ENCODE measurements at regions of chr11 and their contacts with region 1.

Region 1: DNA sequence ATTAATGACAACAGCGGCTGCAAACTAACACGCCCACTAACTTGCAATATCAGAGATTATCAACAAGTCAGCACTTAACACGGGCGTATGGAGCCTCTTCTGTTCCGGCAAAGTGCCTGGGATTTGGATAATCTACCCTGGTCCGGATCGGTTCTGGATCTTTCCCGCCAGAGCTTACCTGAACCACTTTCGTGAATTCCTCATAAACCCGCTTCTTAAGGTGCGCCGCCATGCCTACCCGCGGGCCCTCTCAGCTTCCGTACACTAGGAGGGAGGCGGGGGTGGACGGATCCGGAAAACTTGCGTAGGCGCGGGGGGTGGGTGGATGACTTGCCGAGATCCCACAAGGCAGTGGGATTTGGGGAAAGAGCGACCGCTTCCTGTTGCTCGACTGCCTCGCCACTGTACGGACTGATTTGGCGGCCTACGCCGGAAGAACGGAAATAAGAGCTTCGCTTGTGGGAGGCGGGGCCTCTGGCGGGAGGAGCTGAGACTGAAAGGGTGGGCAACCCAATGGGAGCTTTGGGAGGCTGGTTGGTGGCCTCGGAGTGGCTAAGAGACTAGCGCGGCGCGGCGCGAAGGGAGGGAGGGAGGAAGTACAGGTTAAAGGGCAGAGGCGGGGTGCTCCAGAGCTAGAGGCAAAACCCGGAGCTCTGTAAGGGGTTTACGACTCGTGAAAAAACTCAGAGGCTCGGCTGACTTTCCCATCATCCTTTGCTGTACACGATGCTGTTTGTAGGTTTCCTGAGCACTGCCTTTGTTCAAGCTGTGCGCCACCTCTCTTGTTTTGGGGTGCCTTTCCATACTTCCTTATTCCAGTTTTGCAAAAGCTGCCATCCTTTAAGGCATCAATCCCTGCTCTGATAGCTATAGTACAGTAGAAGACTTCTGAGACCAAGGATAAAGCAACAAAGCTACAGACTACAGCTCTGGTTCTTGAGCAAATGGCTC is at the start of gene INTS4:
- DNase-seq: peak; percentile 88 to 99 (median 99)
- ATAC-seq: peak; percentile 98
- H3K4me3 ChIP-seq: peak within 1 kb of the TSS; percentile 88
- H3K4me3 Mint-ChIP-seq: peak within 1 kb of the TSS; percentile 87 to 96 (median 94)
- H3K27ac ChIP-seq: peak within 1 kb of the TSS; percentile 84
- H3K27ac Mint-ChIP-seq: peak within 1 kb of the TSS; percentile 86 to 99 (median 97)
- H3K4me1 ChIP-seq: peaks cover 16 to 18% of the 10 kb centered on the region in 2 donors
- H3K4me1 Mint-ChIP-seq: peaks cover 10 to 45% (median 28%) of the 10 kb centered on the region in 7 donors
- H3K27me3 ChIP-seq: no peaks in the 10 kb centered on the region
- H3K27me3 Mint-ChIP-seq: no peaks in the 10 kb centered on the region
- total RNA-seq, gene INTS4: 54.4 to 87.0 (median 65.0) TPM

Region 2: DNA sequence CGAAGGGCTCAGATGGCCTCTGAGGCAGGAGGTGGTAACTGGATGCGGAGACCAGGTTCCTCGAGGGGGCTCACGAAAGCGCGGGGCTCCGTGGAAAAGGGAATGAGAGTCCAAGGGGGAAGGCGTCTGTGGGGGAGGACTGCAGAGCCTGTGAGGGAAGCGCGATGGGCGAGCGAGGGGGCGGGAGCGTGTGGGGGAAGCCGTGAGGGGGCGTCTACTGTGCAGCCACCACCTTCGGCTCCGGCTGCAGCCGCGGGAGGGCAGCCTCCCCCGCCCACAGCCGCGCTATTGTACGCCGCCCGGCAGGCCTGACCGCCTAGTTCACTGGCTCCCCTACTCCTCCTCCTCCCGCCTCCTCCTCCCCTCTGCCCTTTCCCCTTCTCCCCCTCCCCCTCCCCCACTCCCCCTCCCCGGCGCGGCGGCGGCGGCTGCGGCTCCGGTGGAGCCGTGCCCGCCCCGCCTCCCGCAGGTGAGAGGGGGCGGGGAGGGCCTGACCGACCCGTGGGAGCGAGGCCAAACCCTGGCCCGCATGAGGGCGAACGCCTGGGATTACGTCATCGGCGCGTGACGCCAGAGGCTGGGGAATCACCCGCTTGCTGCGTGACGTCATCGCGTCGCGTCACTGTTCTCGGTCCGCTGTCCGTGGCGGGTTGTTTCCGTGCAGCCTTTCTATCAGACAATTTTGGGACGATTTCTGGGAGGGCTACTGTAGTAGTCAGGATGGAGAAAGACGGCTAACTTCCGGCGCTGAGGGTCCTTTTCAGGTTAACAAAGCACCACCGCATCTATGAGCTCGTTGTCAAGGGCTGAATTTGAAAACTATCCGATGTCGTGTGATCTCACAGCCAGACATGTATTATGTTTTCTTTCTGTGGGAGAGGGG is 520.6 kb before region 1 on chr11 and contains the start of gene PAK1:
- CTCF ChIA-PET with region 1: no interaction called
- POLR2A ChIA-PET with region 1: no interaction called
- intact Hi-C with region 1: loop called in 1 of 2 experiments (anchors 10 kb)
- DNase-seq: peak; percentile 79 to 96 (median 85)
- ATAC-seq: peak; percentile 89
- H3K4me3 ChIP-seq: peak within 1 kb of the TSS; percentile 43
- H3K4me3 Mint-ChIP-seq: peak within 1 kb of the TSS; percentile 85 to 99 (median 92)
- H3K27ac ChIP-seq: peak within 1 kb of the TSS; percentile 75
- H3K27ac Mint-ChIP-seq: peak within 1 kb of the TSS; percentile 87 to 100 (median 96)
- H3K4me1 ChIP-seq: no peaks in the 10 kb centered on the region
- H3K4me1 Mint-ChIP-seq: peaks cover 12 to 29% (median 23%) of the 10 kb centered on the region in 7 donors
- H3K27me3 ChIP-seq: no peaks in the 10 kb centered on the region
- H3K27me3 Mint-ChIP-seq: peaks cover 0 to 37% (median 0%) of the 10 kb centered on the region in 5 donors
- total RNA-seq, gene PAK1: 18.9 to 67.2 (median 23.3) TPM

Region 3: DNA sequence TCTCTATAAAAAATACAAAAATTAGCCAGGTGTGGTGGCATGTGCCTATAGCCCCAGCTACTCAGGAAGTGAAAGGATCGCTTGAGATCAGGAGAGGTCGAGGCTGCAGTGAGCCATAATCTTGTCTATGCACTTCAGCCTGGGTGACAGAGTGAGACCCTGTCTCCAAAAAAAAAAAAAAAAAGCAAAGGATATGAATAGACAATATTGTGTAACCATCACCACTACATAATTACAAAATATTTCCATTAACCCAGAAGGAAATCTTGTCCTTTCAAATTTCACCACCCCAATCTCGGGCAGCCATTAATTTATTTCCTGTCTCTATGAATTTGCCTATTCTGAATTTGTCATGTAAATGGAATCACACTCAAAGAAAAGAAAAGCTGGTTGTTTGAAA is 195.3 kb before region 1 on chr11:
- CTCF ChIA-PET with region 1: no interaction called
- POLR2A ChIA-PET with region 1: no interaction called
- intact Hi-C with region 1: no loop called
- DNase-seq: no peak
- ATAC-seq: no peak
- H3K4me3 ChIP-seq: no peak overlapping the region
- H3K4me3 Mint-ChIP-seq: peak overlapping the region in 1 of 10 donors; percentile 4
- H3K27ac ChIP-seq: no peak overlapping the region
- H3K27ac Mint-ChIP-seq: peak overlapping the region in 3 of 9 donors; percentile 20 to 37 (median 30)
- H3K4me1 ChIP-seq: peaks cover 0 to 10% of the 10 kb centered on the region in 2 donors
- H3K4me1 Mint-ChIP-seq: peaks cover 17 to 87% (median 79%) of the 10 kb centered on the region in 7 donors
- H3K27me3 ChIP-seq: no peaks in the 10 kb centered on the region
- H3K27me3 Mint-ChIP-seq: no peaks in the 10 kb centered on the region

Region 4: DNA sequence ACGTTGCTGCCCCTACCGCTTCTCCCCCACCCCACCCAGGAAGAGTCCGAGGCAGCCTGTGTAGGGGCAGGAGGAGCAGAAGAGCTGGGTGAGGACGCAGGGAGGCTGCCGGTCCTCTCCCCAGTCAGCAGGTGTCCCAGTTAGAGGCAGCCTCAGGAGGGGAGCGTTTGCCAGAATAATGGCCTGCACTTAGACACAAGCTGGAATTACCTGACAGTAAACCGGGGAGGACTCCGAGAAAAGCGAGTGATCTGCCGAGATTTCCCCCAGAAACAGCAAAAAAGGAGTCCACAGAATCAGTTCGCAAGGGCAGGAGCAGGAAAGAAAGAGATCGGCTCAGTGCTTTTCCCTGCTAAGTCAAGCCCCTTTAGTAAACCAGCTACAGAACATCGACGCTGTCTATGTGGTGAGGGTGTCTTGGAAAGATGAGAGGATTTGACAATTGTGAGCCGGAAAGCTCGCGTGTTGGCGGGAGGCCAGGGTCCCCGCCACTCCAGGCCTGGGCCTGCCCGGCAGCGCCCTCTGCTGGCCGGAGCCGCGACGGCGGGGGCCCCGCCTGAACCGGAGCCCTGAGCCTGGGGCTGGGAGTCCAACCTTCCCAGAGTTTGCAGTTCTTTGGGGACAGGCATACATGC is 51.3 kb after region 1 on chr11:
- CTCF ChIA-PET with region 1: interaction called, 4 read pairs
- POLR2A ChIA-PET with region 1: no interaction called
- intact Hi-C with region 1: loop called in 1 of 2 experiments (anchors 1 kb)
- DNase-seq: peak; percentile 66 to 92 (median 83)
- ATAC-seq: peak; percentile 97
- H3K4me3 ChIP-seq: peak overlapping the region; percentile 57
- H3K4me3 Mint-ChIP-seq: peak overlapping the region; percentile 49 to 78 (median 73)
- H3K27ac ChIP-seq: no peak overlapping the region
- H3K27ac Mint-ChIP-seq: peak overlapping the region in 4 of 9 donors; percentile 4 to 67 (median 43)
- H3K4me1 ChIP-seq: peaks cover 0 to 10% of the 10 kb centered on the region in 2 donors
- H3K4me1 Mint-ChIP-seq: peaks cover 4 to 17% (median 9%) of the 10 kb centered on the region in 7 donors
- H3K27me3 ChIP-seq: no peaks in the 10 kb centered on the region
- H3K27me3 Mint-ChIP-seq: no peaks in the 10 kb centered on the region

Region 5: GRCh38 chr11:78139422-78140391 is 145.0 kb after region 1 on chr11 and contains the start of gene ALG8:
- CTCF ChIA-PET with region 1: no interaction called
- POLR2A ChIA-PET with region 1: interaction called, 12 read pairs
- intact Hi-C with region 1: loop called (anchors 1 kb)
- DNase-seq: peak; percentile 94 to 97 (median 96)
- ATAC-seq: peak; percentile 95
- H3K4me3 ChIP-seq: peak within 1 kb of the TSS; percentile 88
- H3K4me3 Mint-ChIP-seq: peak within 1 kb of the TSS; percentile 85 to 98 (median 95)
- H3K27ac ChIP-seq: peak within 1 kb of the TSS; percentile 82
- H3K27ac Mint-ChIP-seq: peak within 1 kb of the TSS; percentile 87 to 98 (median 93)
- H3K4me1 ChIP-seq: peaks cover 8 to 13% of the 10 kb centered on the region in 2 donors
- H3K4me1 Mint-ChIP-seq: peaks cover 23 to 51% (median 42%) of the 10 kb centered on the region in 7 donors
- H3K27me3 ChIP-seq: no peaks in the 10 kb centered on the region
- H3K27me3 Mint-ChIP-seq: no peaks in the 10 kb centered on the region
- total RNA-seq, gene ALG8: 27.2 to 53.8 (median 30.8) TPM